Naive thymus-derived CD4-positive, alpha-beta T cell (primary cell): ENCODE measurements at regions of chr3 and their contacts with region 1.

Region 1: GRCh38 chr3:25594007-25594502 is 70.7 kb downstream of the TOP2B start:
- DNase-seq: peak in 7 of 9 donors; percentile 16 to 42 (median 25)
- ATAC-seq: peak; percentile 73
- H3K4me3 ChIP-seq: no peak overlapping the region
- H3K4me3 Mint-ChIP-seq: no peak overlapping the region
- H3K27ac ChIP-seq: no peak overlapping the region
- H3K27ac Mint-ChIP-seq: peak overlapping the region in 7 of 9 donors; percentile 3 to 71 (median 40)
- H3K4me1 ChIP-seq: no peaks in the 10 kb centered on the region
- H3K4me1 Mint-ChIP-seq: peaks cover 0 to 9% (median 6%) of the 10 kb centered on the region in 7 donors
- H3K27me3 ChIP-seq: no peaks in the 10 kb centered on the region
- H3K27me3 Mint-ChIP-seq: no peaks in the 10 kb centered on the region

Region 2: DNA sequence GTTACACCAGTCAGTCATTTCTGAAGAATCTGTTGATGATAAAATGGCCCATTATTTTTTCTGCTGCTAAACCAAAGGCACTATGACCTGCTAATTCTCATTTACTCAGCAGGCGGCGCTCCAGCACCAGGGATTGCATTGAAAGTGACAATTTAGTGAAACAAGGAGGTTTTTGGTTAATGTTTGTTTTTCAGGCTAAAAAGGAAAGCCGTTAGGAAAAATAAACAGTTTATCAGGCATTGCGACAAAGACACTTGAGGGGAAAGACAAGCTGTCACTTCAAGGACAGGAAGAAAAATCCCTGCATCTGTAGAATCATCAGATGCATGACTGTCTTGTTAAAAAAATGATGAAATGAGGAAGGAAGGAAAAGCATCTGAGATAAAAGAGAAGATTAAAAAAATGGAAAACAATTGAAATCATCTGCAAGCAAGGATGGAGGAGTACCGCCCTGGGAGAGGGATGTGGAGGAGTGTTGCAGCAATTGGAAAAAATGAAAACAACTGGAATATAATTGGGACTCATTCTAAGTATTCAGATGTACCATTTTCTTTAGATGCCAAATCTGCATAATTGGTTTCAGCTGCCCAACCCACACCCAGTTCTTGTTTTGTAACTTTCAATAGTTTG is 1594.9 kb before region 1 on chr3:
- CTCF ChIA-PET with region 1: no interaction called
- POLR2A ChIA-PET with region 1: no interaction called
- intact Hi-C with region 1: loop called in 1 of 2 experiments (anchors 1 kb)
- DNase-seq: peak in 8 of 9 donors; percentile 24 to 64 (median 29)
- ATAC-seq: peak; percentile 49
- H3K4me3 ChIP-seq: no peak overlapping the region
- H3K4me3 Mint-ChIP-seq: no peak overlapping the region
- H3K27ac ChIP-seq: no peak overlapping the region
- H3K27ac Mint-ChIP-seq: no peak overlapping the region
- H3K4me1 ChIP-seq: no peaks in the 10 kb centered on the region
- H3K4me1 Mint-ChIP-seq: peaks cover 0 to 6% (median 4%) of the 10 kb centered on the region in 7 donors
- H3K27me3 ChIP-seq: no peaks in the 10 kb centered on the region
- H3K27me3 Mint-ChIP-seq: peaks cover 0 to 20% (median 3%) of the 10 kb centered on the region in 5 donors

Region 3: DNA sequence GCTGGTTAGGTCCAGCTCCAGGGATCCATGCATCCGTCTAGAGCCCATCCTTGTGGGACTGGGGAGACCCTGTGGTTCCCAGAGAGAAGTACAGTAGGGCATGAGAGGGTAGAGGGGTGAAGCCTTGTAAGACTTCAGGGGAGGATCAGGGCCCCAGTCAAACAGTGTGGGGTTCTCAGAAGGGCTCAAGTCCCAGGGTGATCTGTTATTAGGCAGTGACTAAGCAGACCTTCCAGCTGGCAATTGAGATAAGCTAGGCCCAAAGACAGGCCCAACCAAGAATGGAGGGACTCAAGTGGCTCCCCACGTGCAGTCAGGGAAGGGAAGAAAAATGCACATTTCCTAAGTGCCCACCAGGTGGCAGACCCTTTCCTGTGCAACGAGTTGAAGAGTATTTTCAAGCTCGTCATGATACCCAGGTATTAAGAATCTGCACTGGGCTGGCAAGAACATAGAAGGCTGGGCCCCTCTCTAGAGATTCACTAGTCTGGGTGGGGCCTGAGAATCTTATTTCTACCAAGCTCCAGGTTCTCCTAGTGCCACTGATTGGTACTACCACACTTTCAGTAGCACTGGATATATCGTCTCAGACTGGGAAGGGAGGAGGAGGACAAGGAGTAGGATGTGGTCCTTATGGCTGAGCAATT is 1408.2 kb before region 1 on chr3:
- CTCF ChIA-PET with region 1: no interaction called
- POLR2A ChIA-PET with region 1: no interaction called
- intact Hi-C with region 1: loop called in 1 of 2 experiments (anchors 5 kb)
- DNase-seq: peak in 3 of 9 donors; percentile 2 to 10 (median 3)
- ATAC-seq: peak; percentile 38
- H3K4me3 ChIP-seq: no peak overlapping the region
- H3K4me3 Mint-ChIP-seq: no peak overlapping the region
- H3K27ac ChIP-seq: no peak overlapping the region
- H3K27ac Mint-ChIP-seq: no peak overlapping the region
- H3K4me1 ChIP-seq: no peaks in the 10 kb centered on the region
- H3K4me1 Mint-ChIP-seq: no peaks in the 10 kb centered on the region
- H3K27me3 ChIP-seq: no peaks in the 10 kb centered on the region
- H3K27me3 Mint-ChIP-seq: peaks cover 0 to 2% (median 0%) of the 10 kb centered on the region in 5 donors

Region 4: DNA sequence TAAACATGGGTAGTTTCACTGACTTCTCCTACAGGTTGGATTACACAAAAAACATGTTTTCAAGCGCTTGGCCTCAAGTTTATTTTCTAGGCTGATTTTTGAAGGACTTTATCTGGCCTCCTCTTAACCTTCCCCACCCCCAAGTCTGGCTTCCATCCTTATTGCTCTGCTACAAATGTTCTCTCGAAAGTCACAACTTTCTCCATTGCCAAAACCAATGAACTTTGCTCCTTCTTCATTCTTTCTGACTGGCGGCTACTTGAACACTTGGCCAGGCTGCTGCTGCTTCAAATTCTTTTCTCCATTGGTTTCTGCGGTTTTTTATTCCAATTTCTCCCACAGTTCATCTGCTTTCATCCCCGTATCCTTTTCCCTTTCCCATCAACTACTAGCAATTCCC is 35.9 kb before region 1 on chr3:
- CTCF ChIA-PET with region 1: no interaction called
- POLR2A ChIA-PET with region 1: no interaction called
- intact Hi-C with region 1: no loop called
- DNase-seq: no peak
- ATAC-seq: no peak
- H3K4me3 ChIP-seq: no peak overlapping the region
- H3K4me3 Mint-ChIP-seq: no peak overlapping the region
- H3K27ac ChIP-seq: no peak overlapping the region
- H3K27ac Mint-ChIP-seq: no peak overlapping the region
- H3K4me1 ChIP-seq: no peaks in the 10 kb centered on the region
- H3K4me1 Mint-ChIP-seq: no peaks in the 10 kb centered on the region
- H3K27me3 ChIP-seq: no peaks in the 10 kb centered on the region
- H3K27me3 Mint-ChIP-seq: peaks cover 0 to 7% (median 5%) of the 10 kb centered on the region in 5 donors